ENCODE measurements at regions of chr15 and their contacts with region 1.

Region 1: GRCh38 chr15:99213187-99213811 is 36.1 kb downstream of the TTC23 start:
- DNase-seq: peak; percentile 37
- H3K4me3 ChIP-seq: no peak overlapping the region
- H3K27ac ChIP-seq: no peak overlapping the region
- H3K4me1 ChIP-seq: no peaks in the 10 kb centered on the region
- H3K27me3 ChIP-seq: no peaks in the 10 kb centered on the region
- CTCF ChIP-seq: peak; percentile 90 to 92

Region 2: DNA sequence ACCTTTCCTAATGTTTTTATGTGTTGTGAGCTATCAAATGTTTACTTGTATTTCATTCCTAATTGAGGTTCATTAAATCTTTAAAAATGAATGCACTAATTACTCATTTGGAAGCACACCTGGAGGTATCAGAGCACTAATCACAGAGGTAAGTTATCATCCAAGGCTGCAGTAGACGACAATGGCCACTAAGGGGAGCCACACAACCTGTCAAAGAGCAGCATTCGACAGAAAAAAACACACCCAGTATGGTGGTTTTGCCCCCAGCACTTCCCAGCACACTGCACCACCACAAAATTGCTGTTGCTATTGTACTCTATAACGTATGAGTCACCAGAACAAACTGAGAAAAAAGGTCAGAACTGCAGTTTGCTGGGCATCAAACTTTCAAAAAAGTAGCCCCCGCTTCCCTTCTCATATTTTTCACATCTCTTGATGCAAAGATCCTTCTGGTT is 770.9 kb before region 1 on chr15:
- CTCF ChIA-PET with region 1: no interaction called
- dilution Hi-C with region 1: no loop called
- in situ Hi-C with region 1: no loop called
- intact Hi-C with region 1: loop called (anchors 2 kb)
- DNase-seq: peak; percentile 86
- H3K4me3 ChIP-seq: no peak overlapping the region
- H3K27ac ChIP-seq: no peak overlapping the region
- H3K4me1 ChIP-seq: peaks cover 6% of the 10 kb centered on the region
- H3K27me3 ChIP-seq: no peaks in the 10 kb centered on the region
- CTCF ChIP-seq: peak; percentile 89 to 97

Region 3: GRCh38 chr15:98966091-98966787 is 247.1 kb before region 1 on chr15:
- CTCF ChIA-PET with region 1: no interaction called
- dilution Hi-C with region 1: no loop called
- in situ Hi-C with region 1: no loop called
- intact Hi-C with region 1: loop called (anchors 5 kb)
- DNase-seq: no peak
- H3K4me3 ChIP-seq: no peak overlapping the region
- H3K27ac ChIP-seq: no peak overlapping the region
- H3K4me1 ChIP-seq: peaks cover 3% of the 10 kb centered on the region
- H3K27me3 ChIP-seq: no peaks in the 10 kb centered on the region
- CTCF ChIP-seq: no peak

Region 4: DNA sequence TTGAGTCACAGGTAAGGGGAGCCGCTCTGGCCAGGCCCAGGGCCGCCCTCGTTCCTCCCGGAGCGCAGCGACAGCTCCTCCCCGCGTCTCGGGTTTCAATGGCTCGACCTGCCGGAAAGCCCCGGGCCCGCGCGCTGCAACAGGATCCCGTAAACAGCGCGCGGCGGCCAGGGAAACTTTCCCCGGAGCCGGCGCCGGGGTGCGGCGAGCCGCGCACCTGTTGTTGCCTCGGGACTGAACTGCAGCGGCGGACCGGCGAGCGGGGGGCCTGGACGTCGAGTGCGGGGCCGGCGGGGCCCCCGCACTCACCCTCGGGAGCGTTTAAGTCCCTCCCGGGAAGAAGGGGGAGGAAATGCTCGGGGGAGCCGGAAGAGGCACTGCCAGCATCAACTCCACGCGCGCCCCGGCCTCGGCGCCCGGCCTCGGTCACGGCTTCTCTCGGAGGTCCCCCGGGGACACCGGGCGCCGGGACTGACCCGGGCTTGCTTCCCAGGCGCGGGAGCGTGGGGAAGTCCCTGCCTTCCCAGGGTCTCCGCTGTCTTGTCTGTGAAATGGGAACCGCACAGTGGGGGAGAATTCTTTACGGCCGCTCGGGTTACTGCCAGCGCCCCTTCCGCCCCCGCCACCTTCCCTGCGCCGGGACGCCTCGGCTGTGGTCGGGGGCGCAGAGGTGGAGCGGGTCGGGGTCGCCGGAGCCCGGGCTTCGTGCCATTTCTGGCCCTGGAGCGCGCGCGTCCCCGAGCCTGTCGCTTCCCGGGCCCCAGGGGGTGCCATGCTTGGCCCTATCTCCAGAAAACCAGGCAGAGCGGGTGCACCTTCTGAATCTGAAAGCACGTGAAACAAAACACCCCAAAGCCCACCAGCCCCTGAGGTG is 198.3 kb before region 1 on chr15:
- CTCF ChIA-PET with region 1: no interaction called
- dilution Hi-C with region 1: no loop called
- in situ Hi-C with region 1: no loop called
- intact Hi-C with region 1: no loop called
- DNase-seq: peak; percentile 85
- H3K4me3 ChIP-seq: peak overlapping the region; percentile 58 to 77 (median 60)
- H3K27ac ChIP-seq: peak overlapping the region; percentile 29
- H3K4me1 ChIP-seq: peaks cover 14% of the 10 kb centered on the region
- H3K27me3 ChIP-seq: no peaks in the 10 kb centered on the region
- CTCF ChIP-seq: no peak

Region 5: DNA sequence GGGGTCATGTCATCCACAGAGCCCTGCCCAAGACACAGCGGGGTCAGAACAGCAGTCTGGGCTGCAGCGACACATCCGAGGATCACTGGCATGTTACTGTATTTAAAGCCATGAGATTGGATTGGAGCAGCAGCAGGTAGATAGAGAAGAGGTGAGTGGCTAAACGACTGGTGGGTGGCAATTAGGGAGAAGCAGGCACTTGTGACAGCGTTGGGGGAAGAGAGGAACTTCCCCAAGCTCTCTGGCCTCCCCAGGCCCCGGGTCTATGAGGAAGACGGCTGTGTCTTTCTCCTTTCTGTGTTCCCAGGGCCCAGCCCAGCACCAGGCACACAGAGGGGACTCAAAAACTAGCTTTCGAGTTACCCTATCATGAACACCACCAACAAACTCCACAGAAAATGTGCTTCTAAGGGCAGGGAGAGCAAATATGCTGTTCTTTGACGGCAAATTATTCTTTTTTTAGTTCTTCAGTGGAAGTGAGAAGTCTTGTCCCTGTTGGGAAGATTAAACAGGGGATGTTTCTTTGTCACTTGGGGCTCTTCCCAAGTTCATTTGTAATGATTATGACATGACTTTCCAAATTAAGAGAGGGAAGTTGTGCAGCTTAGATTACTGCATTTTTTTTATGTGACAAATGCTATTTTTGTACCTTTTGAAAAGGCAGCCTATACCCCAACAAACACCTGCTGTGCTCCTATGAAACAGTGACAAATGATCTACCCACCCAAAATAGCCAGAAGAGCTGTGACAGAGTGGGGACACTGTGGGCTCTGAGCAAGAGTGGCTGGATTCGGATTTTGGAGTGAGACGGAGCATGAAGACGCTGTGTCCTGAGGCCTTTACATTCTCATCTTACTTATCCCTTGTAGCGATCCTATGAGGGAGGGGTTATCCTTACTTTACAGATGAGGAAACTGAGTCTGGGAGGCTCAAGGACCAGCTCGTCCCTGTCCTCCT is 115.6 kb before region 1 on chr15:
- CTCF ChIA-PET with region 1: no interaction called
- dilution Hi-C with region 1: loop called (anchors 5 kb)
- in situ Hi-C with region 1: loop called (anchors 5 kb)
- intact Hi-C with region 1: loop called (anchors 1 kb)
- DNase-seq: no peak
- H3K4me3 ChIP-seq: no peak overlapping the region
- H3K27ac ChIP-seq: no peak overlapping the region
- H3K4me1 ChIP-seq: peaks cover 5% of the 10 kb centered on the region
- H3K27me3 ChIP-seq: peaks cover 1% of the 10 kb centered on the region
- CTCF ChIP-seq: no peak

Region 6: GRCh38 chr15:99104788-99105513 is 108.3 kb before region 1 on chr15 and contains the start of gene SYNM:
- CTCF ChIA-PET with region 1: interaction called, 5 read pairs
- dilution Hi-C with region 1: loop called (anchors 5 kb)
- in situ Hi-C with region 1: loop called in 1 of 2 experiments (anchors 5 kb)
- intact Hi-C with region 1: loop called (anchors 1 kb)
- DNase-seq: peak; percentile 74
- H3K4me3 ChIP-seq: peak within 1 kb of the TSS; percentile 34 to 54 (median 49)
- H3K27ac ChIP-seq: no peak within 1 kb of the TSS
- H3K4me1 ChIP-seq: peaks cover 30% of the 10 kb centered on the region
- H3K27me3 ChIP-seq: peaks cover 1% of the 10 kb centered on the region
- CTCF ChIP-seq: peak; percentile 43 to 60
- total RNA-seq, gene SYNM: 0.82 to 4.3 TPM

Region 7: GRCh38 chr15:99123706-99124451 is 89.4 kb before region 1 on chr15:
- CTCF ChIA-PET with region 1: no interaction called
- dilution Hi-C with region 1: no loop called
- in situ Hi-C with region 1: no loop called
- intact Hi-C with region 1: loop called (anchors 1 kb)
- DNase-seq: peak; percentile 92
- H3K4me3 ChIP-seq: peak overlapping the region; percentile 7 to 28 (median 20)
- H3K27ac ChIP-seq: peak overlapping the region; percentile 22
- H3K4me1 ChIP-seq: peaks cover 28% of the 10 kb centered on the region
- H3K27me3 ChIP-seq: no peaks in the 10 kb centered on the region
- CTCF ChIP-seq: no peak

Measured in mammary epithelial cell (primary cell).